Activated B cell treated with CpG ODN at 0.5 μM for 24 hours (primary cell): ENCODE measurements at regions of chr2 and their contacts with region 1.

Region 1: DNA sequence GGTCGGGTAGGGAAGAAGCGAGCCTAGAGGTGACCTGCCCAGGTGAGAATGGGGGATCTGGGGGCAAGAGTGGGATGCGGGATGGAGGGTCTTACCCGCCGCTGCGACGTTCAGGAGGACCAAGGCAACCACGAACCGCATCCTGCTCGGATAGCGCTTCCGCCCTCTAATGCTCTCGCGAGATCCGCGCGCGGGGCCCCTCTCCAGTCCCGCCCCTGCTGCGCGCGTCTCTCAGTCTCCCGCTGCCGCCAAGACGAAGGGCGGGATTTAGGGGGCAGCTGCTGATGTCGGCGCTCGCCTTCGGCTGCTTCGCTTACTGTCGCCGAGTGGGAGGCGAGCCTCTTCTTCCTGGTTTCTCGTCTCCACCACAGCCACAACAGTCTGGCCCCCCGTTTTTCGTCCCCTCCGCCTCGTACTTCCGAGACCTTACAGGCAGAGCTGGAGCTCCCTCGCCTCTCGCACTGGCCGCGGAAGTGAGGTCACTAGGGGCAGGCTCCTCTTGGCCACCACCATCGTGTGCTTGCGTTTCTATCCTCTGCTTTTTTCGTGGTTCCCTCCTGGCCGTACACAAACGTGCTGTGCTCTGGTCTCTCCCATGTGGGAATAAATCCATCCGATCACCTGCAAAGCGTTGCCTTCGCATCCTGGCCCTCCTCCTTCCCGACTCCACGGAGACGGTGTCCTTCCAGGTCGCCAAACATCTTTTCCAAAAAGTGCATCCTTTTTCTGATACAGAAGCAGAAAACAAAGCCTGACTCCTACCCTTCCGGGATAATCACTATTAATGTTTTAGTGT is at the start of gene TGOLN2:
- DNase-seq: peak; percentile 91
- ATAC-seq: peak; percentile 90
- H3K4me3 Mint-ChIP-seq: peak within 1 kb of the TSS; percentile 99
- H3K27ac Mint-ChIP-seq: peak within 1 kb of the TSS; percentile 100
- H3K4me1 Mint-ChIP-seq: peaks cover 61% of the 10 kb centered on the region
- H3K27me3 Mint-ChIP-seq: no peaks in the 10 kb centered on the region
- CTCF ChIP-seq: no peak
- total RNA-seq, gene TGOLN2: 103 and 119 TPM in 2 replicates

Region 2: DNA sequence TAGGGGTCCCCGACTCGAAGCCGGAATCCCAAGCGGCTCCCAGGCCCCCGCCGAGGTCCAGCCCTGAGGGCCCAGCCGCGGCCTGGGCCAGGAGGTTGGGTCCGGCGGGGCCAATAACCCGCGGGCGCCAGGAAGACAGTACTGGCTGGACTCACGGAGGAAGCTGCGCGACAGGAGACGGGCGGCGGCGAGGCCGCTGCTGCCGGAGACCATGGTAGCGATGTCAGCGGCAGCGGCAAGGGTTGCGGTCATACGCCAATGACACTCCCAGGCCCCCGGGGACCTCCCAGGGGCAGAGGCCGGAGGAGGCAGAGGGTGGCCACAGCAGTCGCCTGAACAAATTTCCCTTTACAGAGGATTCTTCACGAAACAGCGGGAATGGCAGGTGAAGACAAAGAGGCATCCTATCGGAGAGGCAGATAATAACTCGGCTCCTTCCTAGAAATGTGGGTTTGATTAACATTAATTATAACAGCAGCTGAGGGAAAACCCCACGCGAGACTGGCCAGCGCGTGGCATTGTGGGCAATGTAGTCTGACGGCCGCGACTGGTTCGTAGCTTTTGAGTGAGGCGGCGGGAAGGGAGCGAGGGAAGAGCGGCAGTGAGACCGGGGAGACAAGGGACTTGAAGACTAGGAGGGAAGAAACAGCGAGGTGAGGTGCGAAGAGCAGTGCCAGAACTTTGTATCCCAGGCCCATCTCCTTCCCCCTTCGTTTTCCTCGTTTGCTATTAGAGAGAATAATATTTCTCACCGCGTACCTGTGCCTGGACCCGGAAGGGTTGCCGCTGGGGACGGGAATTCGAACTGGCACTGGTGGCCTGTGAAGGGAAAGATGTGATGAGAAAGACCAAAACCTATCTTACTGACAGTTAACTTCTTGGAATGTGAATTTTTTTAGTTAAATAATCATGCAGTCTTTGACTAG is 868.7 kb before region 1 on chr2 and contains the start of gene SUCLG1:
- CTCF ChIA-PET with region 1: no interaction called
- POLR2A ChIA-PET with region 1: no interaction called
- intact Hi-C with region 1: loop called (anchors 1 kb)
- DNase-seq: peak; percentile 78
- ATAC-seq: peak; percentile 98
- H3K4me3 Mint-ChIP-seq: peak within 1 kb of the TSS; percentile 93
- H3K27ac Mint-ChIP-seq: peak within 1 kb of the TSS; percentile 98
- H3K4me1 Mint-ChIP-seq: peaks cover 33% of the 10 kb centered on the region
- H3K27me3 Mint-ChIP-seq: no peaks in the 10 kb centered on the region
- CTCF ChIP-seq: no peak
- total RNA-seq, gene SUCLG1: 45.3 and 45.9 TPM in 2 replicates

Region 3: GRCh38 chr2:85181134-85181631 is 146.8 kb before region 1 on chr2:
- CTCF ChIA-PET with region 1: no interaction called
- POLR2A ChIA-PET with region 1: no interaction called
- intact Hi-C with region 1: no loop called
- DNase-seq: no peak
- ATAC-seq: no peak
- H3K4me3 Mint-ChIP-seq: no peak overlapping the region
- H3K27ac Mint-ChIP-seq: no peak overlapping the region
- H3K4me1 Mint-ChIP-seq: no peaks in the 10 kb centered on the region
- H3K27me3 Mint-ChIP-seq: peaks cover 12% of the 10 kb centered on the region
- CTCF ChIP-seq: no peak

Region 4: GRCh38 chr2:85308896-85309555 is 19.0 kb before region 1 on chr2:
- CTCF ChIA-PET with region 1: no interaction called
- POLR2A ChIA-PET with region 1: interaction called, 30 read pairs
- intact Hi-C with region 1: loop called (anchors 2 kb)
- DNase-seq: no peak
- ATAC-seq: peak; percentile 33
- H3K4me3 Mint-ChIP-seq: peak overlapping the region; percentile 58
- H3K27ac Mint-ChIP-seq: peak overlapping the region; percentile 75
- H3K4me1 Mint-ChIP-seq: peaks cover 25% of the 10 kb centered on the region
- H3K27me3 Mint-ChIP-seq: peaks cover 5% of the 10 kb centered on the region
- CTCF ChIP-seq: no peak

Region 5: DNA sequence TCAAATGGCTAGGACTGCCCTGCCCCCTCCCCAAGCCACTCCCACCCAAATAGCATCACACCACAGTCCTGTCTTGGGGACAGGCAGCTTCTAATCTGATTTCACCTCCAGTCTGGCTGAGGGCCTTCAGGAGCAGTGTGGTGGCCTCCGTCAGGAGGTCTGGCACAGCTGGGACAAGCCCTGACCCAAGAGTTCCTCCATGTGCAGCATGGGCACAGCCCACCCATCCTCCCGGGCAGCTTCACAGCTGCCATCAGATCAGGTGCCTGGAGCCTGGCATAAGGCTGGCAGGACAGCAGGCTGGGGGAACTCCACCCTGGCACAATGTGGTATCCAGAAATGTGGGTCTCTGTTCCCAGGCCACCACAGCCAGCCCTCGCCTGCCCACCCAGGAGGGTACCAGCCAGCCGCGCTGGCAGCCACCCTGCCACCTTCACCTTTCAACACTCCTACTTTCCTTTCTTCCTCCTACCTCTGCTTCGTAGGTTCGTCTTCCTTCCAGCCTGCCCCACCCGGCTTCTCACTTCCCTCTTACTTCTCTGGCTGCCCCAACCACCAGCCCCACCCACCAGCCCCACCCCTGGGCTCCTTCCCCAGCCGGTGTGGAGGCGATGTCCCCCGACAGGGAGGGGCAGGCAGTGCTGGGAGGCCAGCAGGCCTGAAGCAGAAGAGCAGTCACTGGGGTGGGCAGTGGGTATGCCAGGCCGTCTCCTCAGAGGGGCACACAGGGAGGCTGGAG is 82.0 kb after region 1 on chr2 and contains the start of gene CAPG:
- CTCF ChIA-PET with region 1: no interaction called
- POLR2A ChIA-PET with region 1: interaction called, 24 read pairs
- intact Hi-C with region 1: loop called (anchors 1 kb)
- DNase-seq: peak; percentile 76
- ATAC-seq: peak; percentile 75
- H3K4me3 Mint-ChIP-seq: peak within 1 kb of the TSS; percentile 89
- H3K27ac Mint-ChIP-seq: peak within 1 kb of the TSS; percentile 92
- H3K4me1 Mint-ChIP-seq: peaks cover 90% of the 10 kb centered on the region
- H3K27me3 Mint-ChIP-seq: no peaks in the 10 kb centered on the region
- CTCF ChIP-seq: no peak
- total RNA-seq, gene CAPG: 208 and 213 TPM in 2 replicates

Region 6: DNA sequence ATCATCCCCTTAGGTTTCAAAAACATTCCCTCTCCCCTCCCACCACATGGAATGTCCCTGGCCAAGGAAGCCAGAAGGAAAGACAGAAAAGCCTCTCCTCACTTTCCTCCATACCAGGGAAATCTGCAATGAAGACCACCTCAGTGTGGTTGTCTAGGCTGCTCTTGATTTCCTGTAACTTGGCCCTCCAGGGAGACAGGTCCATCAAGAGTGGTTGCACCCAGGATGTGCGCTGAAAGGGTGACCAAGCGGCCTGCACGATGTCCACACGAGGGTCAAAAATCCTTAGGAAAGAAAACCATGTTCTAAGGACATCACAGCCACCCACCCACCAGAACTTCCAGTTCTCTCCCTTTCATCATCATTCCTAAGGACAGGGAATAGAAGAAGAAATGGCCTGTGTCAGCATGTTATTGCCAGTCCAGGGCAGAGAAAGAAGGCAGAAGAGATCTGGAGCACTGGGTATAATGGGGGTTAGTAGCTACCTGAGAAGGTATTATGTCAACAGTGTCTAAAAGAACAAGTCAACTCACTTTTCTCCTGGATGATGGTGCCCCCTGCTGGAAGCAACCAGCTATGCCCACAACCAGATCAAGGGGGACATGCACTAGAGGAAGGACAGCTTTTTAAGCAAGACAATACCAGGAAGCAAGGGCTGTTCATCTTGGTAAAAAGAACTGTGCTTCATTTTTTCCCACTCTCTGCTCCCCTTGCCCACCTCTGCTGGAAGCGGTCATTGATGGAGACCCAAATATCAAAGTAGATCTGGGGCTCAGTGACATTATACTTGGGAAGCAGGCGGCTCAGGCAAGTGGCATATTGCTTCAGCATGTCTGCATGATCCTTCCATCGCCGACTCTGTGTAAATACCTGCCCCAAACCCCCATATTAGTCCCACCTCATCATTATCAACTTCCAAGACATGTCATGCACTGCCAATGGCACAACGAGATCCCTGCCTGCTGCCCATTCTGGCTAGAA is 224.0 kb after region 1 on chr2:
- CTCF ChIA-PET with region 1: interaction called, 6 read pairs
- POLR2A ChIA-PET with region 1: interaction called, 14 read pairs
- intact Hi-C with region 1: loop called (anchors 1 kb)
- DNase-seq: peak; percentile 63
- ATAC-seq: peak; percentile 98
- H3K4me3 Mint-ChIP-seq: no peak overlapping the region
- H3K27ac Mint-ChIP-seq: no peak overlapping the region
- H3K4me1 Mint-ChIP-seq: peaks cover 4% of the 10 kb centered on the region
- H3K27me3 Mint-ChIP-seq: no peaks in the 10 kb centered on the region
- CTCF ChIP-seq: peak; percentile 28

Region 7: DNA sequence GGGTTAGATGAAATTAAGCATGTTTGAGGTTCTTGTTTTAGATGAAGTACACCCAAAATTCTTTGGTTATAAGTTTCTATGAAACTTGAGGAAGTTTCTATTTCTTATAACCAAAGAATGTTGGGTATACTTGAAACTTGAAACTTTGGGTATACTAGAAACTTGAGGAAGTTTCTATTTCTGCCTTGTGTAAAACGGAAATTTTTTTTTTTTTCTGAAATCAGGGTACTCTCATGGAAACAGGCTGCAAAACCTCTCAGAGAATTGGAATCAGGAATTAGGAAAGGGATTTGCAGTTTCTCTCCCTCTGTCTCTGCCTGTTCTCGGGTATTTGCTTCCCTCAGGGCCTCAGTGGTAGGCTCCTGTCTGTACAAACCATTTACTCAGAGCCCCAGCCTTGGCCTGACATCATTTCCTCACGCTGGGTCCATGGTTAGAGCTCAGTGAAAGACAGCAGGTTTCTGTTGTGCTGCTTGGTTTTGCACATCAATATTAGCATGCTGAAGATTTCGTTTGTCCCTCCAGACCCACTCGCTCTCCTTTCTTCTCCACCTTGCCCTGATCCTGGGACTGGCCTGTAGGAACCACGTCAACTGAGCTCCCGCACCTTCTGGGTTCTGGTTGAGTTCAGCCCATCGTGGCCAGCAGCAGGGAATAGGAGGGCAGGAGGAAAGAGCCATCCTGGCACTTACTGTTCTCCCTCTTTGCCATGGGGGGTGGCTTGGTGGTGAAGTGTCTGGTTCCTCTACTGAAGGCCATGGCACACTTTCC is 671.2 kb after region 1 on chr2:
- CTCF ChIA-PET with region 1: no interaction called
- POLR2A ChIA-PET with region 1: interaction called, 10 read pairs
- intact Hi-C with region 1: no loop called
- DNase-seq: no peak
- ATAC-seq: peak; percentile 73
- H3K4me3 Mint-ChIP-seq: peak overlapping the region; percentile 66
- H3K27ac Mint-ChIP-seq: peak overlapping the region; percentile 96
- H3K4me1 Mint-ChIP-seq: peaks cover 76% of the 10 kb centered on the region
- H3K27me3 Mint-ChIP-seq: no peaks in the 10 kb centered on the region
- CTCF ChIP-seq: no peak

Region 8: DNA sequence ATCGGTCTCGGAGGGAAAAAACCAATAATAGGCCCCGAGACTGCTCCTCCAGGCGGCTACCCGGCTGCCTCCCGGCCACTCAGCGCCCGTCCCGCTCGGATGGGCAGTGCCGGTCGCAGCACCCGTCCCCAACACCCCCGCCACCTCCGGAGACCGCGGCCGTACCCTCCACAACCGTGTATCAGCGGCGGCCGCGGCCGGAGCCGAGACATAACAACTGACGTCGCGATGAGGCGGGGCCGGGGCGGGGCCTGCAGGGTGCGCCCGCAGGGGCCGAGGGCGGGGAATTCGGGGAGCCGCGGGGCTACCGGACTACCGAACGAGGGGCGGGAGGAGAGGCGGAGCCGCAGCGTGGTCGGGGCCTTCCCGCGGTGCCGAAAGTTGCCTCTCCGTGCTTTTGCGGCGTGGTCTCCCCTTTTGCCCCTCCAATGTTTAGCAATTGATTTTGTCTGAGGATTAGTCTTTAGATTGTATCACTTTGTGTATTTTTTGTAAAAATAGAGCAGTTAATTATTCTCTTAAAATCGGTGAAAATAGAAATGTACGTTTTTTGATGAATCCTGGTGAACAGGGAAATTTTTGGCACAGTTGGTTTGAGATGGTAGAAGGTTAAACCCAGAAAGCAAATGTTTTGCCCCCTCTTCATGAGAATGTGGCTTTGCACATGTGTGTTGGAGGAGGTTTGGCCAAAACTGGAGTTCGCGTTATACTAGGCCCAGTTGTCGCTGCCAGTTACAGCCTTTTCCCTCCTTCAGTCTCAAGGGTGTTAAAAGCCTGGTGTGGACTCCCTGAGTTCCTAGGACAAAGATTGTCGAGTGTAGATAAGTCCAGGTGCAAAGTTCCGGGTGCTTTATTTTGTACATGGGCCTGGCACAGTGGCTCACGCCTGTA is 1295.9 kb after region 1 on chr2 and contains the start of gene RNF103:
- CTCF ChIA-PET with region 1: no interaction called
- POLR2A ChIA-PET with region 1: interaction called, 4 read pairs
- intact Hi-C with region 1: loop called (anchors 10 kb)
- DNase-seq: peak; percentile 98
- ATAC-seq: peak; percentile 86
- H3K4me3 Mint-ChIP-seq: peak within 1 kb of the TSS; percentile 94
- H3K27ac Mint-ChIP-seq: peak within 1 kb of the TSS; percentile 96
- H3K4me1 Mint-ChIP-seq: peaks cover 35% of the 10 kb centered on the region
- H3K27me3 Mint-ChIP-seq: no peaks in the 10 kb centered on the region
- CTCF ChIP-seq: no peak
- total RNA-seq, gene RNF103: 18.6 and 22.2 TPM in 2 replicates